Ovary (tissue), 10 donors: ENCODE measurements at regions of chr12 and their contacts with region 1.

Region 1: GRCh38 chr12:6965026-6965661 is 5.3 kb downstream of the PHB2 start:
- DNase-seq: peak; percentile 86 to 90 (median 90)
- H3K4me3 ChIP-seq: no peak overlapping the region
- H3K27ac ChIP-seq: peak overlapping the region; percentile 57 to 67
- H3K4me1 ChIP-seq: peaks cover 12% of the 10 kb centered on the region
- H3K27me3 ChIP-seq: no peaks in the 10 kb centered on the region
- CTCF ChIP-seq: peak; percentile 85 to 90 (median 87)
- EP300 ChIP-seq: no peak
- POLR2A ChIP-seq: no peak

Region 2: DNA sequence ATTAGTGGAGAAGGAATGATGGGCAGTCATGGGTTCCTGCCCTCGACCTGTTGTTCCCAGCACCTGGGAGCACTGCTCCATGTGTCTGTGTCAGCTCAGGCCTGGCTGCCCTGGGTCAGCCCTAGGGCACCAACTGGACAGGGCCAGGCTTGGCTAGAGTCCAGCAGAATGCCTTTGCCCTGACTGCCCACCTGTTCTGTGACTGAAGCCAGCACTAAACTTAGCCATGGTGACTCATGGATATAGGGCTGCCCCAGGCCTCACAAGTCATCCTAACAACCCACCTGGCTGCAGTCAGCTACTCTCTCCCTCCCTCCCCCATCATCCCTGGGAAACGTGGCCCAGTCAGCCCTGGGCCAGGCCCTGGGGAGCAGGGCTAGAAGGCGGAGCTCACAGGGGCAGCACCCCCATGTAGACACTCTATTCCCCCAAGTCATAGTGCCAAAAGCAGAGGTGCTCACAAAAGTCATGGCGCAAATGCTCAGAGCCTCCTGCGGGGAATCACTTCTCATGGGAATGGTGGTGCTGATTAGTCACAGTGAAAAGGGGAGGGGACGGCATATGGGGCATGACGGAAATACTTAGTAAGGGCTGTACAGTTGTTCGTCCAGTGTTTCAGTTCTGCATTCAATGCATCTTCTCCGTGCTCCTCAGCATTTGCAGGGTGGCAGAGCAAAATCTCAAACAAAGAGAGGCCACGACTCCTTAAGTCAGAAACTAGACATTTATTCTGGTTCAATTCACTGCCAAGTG is 1585.2 kb before region 1 on chr12:
- intact Hi-C with region 1: no loop called
- DNase-seq: no peak
- H3K4me3 ChIP-seq: no peak overlapping the region
- H3K27ac ChIP-seq: no peak overlapping the region
- H3K4me1 ChIP-seq: no peaks in the 10 kb centered on the region
- H3K27me3 ChIP-seq: no peaks in the 10 kb centered on the region
- CTCF ChIP-seq: no peak
- EP300 ChIP-seq: no peak
- POLR2A ChIP-seq: no peak

Region 3: GRCh38 chr12:6867413-6868210 is 97.5 kb before region 1 on chr12 and contains the start of gene TPI1:
- intact Hi-C with region 1: loop called (anchors 5 to 10 kb)
- DNase-seq: peak; percentile 87 to 91 (median 89)
- H3K4me3 ChIP-seq: peak within 1 kb of the TSS; percentile 83
- H3K27ac ChIP-seq: peak within 1 kb of the TSS; percentile 73 to 90
- H3K4me1 ChIP-seq: no peaks in the 10 kb centered on the region
- H3K27me3 ChIP-seq: no peaks in the 10 kb centered on the region
- CTCF ChIP-seq: no peak
- EP300 ChIP-seq: no peak
- POLR2A ChIP-seq: peak; percentile 95
- total RNA-seq, gene TPI1: 136 to 443 (median 295) TPM

Region 4: DNA sequence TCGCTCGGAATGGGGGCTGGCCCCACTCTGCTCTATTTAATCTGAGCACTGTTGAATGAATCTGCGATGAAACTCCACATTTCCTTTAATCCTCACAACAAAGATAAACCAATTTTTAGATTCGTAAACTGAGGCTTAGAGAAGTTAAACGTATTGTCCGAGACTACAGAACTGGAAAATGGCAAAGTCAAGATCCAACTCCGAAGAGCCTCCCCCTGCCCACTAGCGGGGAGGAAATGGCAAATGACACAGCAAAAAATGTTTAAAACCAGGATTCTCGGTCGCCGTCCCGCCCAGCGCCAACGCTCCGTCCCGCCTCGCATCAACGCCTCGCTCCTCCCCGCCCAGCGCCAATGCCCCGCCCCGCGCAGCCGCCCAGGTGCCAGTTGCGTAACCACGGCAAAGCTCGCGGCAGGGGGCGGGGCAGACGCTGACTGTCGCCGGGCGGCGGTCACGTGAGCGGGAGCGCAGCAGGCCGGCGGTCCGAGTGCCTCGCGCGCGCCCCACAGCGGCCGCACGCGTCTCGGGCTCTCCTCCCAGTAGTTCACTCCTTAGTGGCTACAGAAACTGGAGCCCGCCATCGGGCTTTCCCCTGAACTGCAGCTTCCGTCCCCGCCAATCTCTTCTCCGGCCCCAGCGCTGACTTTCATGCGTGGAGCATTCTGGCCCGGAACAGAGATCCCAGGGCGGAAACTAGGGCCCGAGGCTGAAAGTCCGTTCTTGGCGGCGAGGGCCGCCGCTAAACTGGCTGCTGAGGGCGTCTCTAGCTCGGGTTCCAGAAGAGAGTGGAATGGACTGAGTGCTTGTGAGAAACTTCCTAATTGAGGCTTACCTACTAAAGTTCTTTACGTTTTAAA is 74.1 kb before region 1 on chr12:
- intact Hi-C with region 1: no loop called
- DNase-seq: peak; percentile 98 to 99 (median 99)
- H3K4me3 ChIP-seq: peak overlapping the region; percentile 47
- H3K27ac ChIP-seq: peak overlapping the region; percentile 40 to 60
- H3K4me1 ChIP-seq: peaks cover 2% of the 10 kb centered on the region
- H3K27me3 ChIP-seq: no peaks in the 10 kb centered on the region
- CTCF ChIP-seq: peak; percentile 94 to 98 (median 97)
- EP300 ChIP-seq: peak; percentile 66
- POLR2A ChIP-seq: peak; percentile 73

Region 5: DNA sequence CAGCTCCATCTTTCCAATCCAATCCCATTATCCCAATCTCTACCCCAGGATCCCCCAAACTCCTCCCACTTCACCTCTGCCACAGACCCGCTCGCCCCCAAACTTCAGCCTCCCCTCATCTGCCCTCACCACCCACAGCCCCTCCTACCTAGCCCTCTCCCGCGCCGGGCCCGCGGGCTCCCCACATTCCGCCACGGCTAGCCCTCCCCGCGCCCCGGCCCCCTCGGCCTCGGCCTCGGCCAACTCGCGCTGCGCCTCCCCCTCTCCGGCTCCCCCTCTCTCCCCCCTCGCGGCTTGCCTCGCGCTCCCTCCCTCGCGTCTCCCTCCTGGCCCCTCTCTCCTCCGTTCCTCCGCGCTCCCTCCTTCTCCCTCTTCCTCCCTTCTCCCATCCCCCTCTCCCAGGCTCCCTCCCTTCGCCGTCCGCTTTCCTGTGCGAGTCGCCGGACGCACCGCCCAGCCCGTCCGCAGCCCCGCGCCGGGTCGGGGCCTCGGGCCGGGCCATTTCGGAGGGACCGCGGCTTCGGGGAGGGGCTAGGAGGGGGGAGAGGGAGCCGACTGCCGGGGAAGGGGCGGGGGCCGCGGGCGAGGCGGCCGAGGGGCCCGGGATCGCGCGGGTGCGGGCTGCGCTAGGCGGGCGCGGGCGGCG is 37.6 kb before region 1 on chr12 and contains the start of gene ATN1:
- intact Hi-C with region 1: loop called in 1 of 4 experiments (anchors 2 kb)
- DNase-seq: peak; percentile 93 to 96 (median 96)
- H3K4me3 ChIP-seq: peak within 1 kb of the TSS; percentile 74
- H3K27ac ChIP-seq: peak within 1 kb of the TSS; percentile 95 to 99
- H3K4me1 ChIP-seq: peaks cover 23% of the 10 kb centered on the region
- H3K27me3 ChIP-seq: no peaks in the 10 kb centered on the region
- CTCF ChIP-seq: no peak
- EP300 ChIP-seq: no peak
- POLR2A ChIP-seq: peak; percentile 77
- total RNA-seq, gene ATN1: 73.9 to 324 (median 206) TPM

Region 6: DNA sequence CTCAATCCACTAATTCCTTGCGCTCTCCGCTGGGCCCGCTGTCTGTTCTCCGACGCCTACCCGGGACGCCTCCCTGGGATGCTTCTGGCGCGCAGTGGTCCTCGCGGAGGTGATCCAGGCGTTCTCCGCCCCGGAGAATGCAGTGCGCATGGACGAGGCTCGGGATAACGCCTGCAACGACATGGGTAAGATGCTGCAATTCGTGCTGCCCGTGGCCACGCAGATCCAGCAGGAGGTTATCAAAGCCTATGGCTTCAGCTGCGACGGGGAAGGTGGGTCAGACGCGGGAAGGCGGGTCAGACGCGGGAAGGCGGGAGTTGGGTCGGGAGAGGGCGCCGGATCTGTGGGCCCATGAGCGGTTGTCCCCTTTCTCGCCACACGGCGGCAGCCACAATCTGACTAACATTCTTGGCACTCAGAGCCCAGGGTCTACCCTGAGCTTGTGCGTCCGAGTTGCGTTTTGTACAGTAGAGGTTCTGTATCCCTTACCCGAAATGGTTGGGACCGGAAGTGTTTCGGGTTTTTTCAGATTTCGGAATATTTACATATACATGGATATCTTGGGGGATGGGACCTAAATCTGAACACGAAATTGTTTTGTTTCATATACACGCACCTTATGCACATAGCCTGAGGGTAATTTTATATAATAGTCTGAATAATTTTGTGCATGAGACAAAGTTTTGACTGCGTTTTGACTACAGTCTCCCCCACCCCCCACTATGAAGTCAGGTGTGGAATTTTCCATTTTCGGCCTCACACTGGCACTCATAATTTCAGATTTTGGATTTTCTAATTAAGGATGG is 20.6 kb before region 1 on chr12:
- intact Hi-C with region 1: loop called in 1 of 4 experiments (anchors 2 kb)
- DNase-seq: peak; percentile 91 to 96 (median 94)
- H3K4me3 ChIP-seq: peak overlapping the region; percentile 60
- H3K27ac ChIP-seq: peak overlapping the region; percentile 68 to 94
- H3K4me1 ChIP-seq: peaks cover 12% of the 10 kb centered on the region
- H3K27me3 ChIP-seq: no peaks in the 10 kb centered on the region
- CTCF ChIP-seq: peak; percentile 77 to 97 (median 93)
- EP300 ChIP-seq: no peak
- POLR2A ChIP-seq: peak; percentile 70